Transverse colon (tissue), 4 donors: ENCODE measurements at regions of chr6 and their contacts with region 1.

Region 1: DNA sequence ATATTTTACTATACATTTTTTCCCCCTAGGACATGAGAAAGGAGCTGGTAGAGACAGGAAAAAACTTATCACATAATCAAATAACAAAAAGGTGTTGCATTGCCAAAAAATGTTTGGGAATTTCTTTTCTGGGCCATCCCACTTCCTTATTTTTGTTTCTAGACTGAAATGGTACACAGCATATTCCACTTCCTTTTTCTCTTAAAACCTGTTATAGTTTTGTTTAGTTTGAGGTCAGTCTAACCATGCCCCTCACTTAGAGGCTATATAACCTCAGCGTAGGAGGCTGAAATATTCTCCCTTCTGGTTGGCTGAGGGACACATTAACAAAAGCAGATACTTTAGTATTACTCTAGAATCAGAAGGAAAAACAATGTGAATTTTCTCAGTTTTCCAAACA is 323.9 kb downstream of the GJA1 start:
- DNase-seq: no peak
- H3K4me3 ChIP-seq: no peak overlapping the region
- H3K27ac ChIP-seq: no peak overlapping the region
- H3K4me1 ChIP-seq: no peaks in the 10 kb centered on the region
- H3K27me3 ChIP-seq: no peaks in the 10 kb centered on the region
- CTCF ChIP-seq: no peak
- EP300 ChIP-seq: no peak
- POLR2A ChIP-seq: no peak

Region 2: GRCh38 chr6:120141593-120141992 is 1617.8 kb before region 1 on chr6:
- in situ Hi-C with region 1: no loop called
- intact Hi-C with region 1: no loop called
- DNase-seq: no peak
- H3K4me3 ChIP-seq: no peak overlapping the region
- H3K27ac ChIP-seq: no peak overlapping the region
- H3K4me1 ChIP-seq: no peaks in the 10 kb centered on the region
- H3K27me3 ChIP-seq: no peaks in the 10 kb centered on the region
- CTCF ChIP-seq: no peak
- EP300 ChIP-seq: no peak
- POLR2A ChIP-seq: no peak

Region 3: GRCh38 chr6:121780325-121781313 is 21.2 kb after region 1 on chr6:
- in situ Hi-C with region 1: no loop called
- intact Hi-C with region 1: loop called (anchors 1 kb)
- DNase-seq: no peak
- H3K4me3 ChIP-seq: no peak overlapping the region
- H3K27ac ChIP-seq: no peak overlapping the region
- H3K4me1 ChIP-seq: no peaks in the 10 kb centered on the region
- H3K27me3 ChIP-seq: no peaks in the 10 kb centered on the region
- CTCF ChIP-seq: no peak
- EP300 ChIP-seq: no peak
- POLR2A ChIP-seq: no peak